ENCODE measurements at regions of chr19 and their contacts with region 1.

Region 1: DNA sequence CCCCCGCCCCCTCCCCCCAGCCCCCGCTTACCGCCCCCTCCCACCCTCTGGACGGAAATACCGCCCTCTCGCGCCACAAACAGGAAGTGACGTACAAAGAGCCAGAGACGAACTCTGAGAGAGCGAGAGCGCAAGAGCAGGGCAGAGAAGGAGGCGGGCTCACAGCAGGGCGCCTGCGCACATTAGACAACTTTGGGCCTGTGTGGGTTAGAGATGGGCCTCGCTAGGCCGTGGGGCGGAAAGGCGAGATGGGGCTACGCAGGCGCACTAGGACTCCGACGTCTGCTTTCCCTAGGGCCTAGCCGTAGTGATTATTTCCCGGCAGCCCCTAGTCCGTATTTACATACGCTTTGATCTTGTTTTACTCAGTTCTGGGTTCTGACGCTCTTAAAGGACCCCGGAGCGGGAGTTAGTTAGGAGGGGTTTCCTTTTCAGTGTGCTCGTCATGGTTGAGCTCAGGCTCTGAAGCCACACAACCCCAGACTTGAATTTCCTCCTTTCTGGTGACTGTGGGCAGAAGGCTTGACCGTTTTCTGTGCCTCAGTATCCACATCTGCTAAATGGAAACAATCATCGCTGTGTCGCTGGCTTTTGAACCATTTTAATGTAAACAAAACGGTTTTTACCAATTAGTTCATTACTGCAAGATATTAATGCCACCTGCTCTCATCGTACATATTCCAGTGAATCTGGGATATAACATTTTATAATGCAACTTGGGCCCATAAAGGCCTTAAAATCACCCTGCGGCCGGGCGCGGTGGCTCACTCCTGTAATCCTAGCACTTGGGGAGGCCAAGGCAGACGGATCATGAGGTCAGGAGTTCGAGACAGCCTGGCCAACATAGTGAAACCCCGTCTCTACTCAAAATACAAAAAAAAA is 449 bp upstream of the AKT2 start:
- DNase-seq: peak; percentile 98
- ATAC-seq: peak; percentile 89
- H3K4me3 Mint-ChIP-seq: peak overlapping the region; percentile 95
- H3K27ac Mint-ChIP-seq: peak overlapping the region; percentile 99
- H3K4me1 Mint-ChIP-seq: peaks cover 42% of the 10 kb centered on the region
- H3K27me3 Mint-ChIP-seq: no peaks in the 10 kb centered on the region

Region 2: GRCh38 chr19:39996811-39997594 is 288.6 kb before region 1 on chr19 and contains the start of gene ZNF546:
- CTCF ChIA-PET with region 1: no interaction called
- POLR2A ChIA-PET with region 1: no interaction called
- intact Hi-C with region 1: loop called in 1 of 2 experiments (anchors 1 kb)
- DNase-seq: peak; percentile 94
- ATAC-seq: peak; percentile 90
- H3K4me3 Mint-ChIP-seq: peak within 1 kb of the TSS; percentile 90
- H3K27ac Mint-ChIP-seq: peak within 1 kb of the TSS; percentile 99
- H3K4me1 Mint-ChIP-seq: peaks cover 48% of the 10 kb centered on the region
- H3K27me3 Mint-ChIP-seq: no peaks in the 10 kb centered on the region
- total RNA-seq, gene ZNF546: 6.3 to 6.9 TPM

Region 3: DNA sequence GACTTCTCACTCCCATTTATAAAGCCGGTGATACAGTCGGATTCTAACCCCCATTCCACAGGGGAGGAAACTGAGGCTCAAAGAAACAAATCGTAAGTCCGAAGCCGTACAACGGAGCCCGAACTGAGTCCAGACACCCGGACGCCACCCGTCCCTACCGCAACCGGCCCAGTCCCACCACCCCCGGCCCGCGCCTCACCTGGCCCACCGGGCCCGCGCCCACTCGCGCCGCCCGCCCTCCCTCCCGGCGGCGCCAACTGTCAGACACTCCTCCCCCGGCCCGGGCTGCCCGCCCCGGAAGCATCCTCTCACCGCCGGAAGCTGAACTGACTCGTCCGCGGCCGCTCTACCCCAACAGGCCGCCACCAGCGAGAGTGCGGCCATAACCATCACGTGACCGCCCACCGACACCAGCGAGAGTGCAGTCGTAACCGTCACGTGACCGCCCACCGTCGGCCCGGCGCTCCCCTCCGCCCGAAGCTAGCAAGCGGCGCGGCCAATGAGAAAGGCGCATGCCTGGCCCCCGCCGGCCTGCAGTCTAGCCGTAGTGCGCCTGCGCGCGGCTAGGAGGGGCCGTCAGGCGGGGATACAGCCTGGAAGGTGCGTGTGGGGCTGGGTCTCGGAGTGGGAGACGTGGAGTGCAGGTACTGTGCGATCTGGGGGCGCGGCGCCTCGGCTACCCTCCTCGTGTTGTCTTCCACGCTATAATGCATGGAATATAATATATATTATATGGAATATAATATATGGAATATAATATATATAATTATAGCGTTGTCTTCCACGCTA is 62.7 kb after region 1 on chr19 and contains the starts of genes C19orf47 and PLD3:
- CTCF ChIA-PET with region 1: no interaction called
- POLR2A ChIA-PET with region 1: no interaction called
- intact Hi-C with region 1: loop called (anchors 1 kb)
- DNase-seq: peak; percentile 100
- ATAC-seq: peak; percentile 97
- H3K4me3 Mint-ChIP-seq: peak within 1 kb of the TSS; percentile 96
- H3K27ac Mint-ChIP-seq: peak within 1 kb of the TSS; percentile 91
- H3K4me1 Mint-ChIP-seq: peaks cover 26% of the 10 kb centered on the region
- H3K27me3 Mint-ChIP-seq: no peaks in the 10 kb centered on the region
- total RNA-seq, gene C19orf47: 15.8 to 17.7 TPM
- total RNA-seq, gene PLD3: 57.8 to 69.1 TPM

Region 4: GRCh38 chr19:40465557-40466150 is 180.1 kb after region 1 on chr19 and contains the start of gene BLVRB:
- CTCF ChIA-PET with region 1: interaction called, 6 read pairs
- POLR2A ChIA-PET with region 1: interaction called, 3 read pairs
- intact Hi-C with region 1: loop called in 1 of 2 experiments (anchors 1 kb)
- DNase-seq: peak; percentile 100
- ATAC-seq: peak; percentile 84
- H3K4me3 Mint-ChIP-seq: peak within 1 kb of the TSS; percentile 77
- H3K27ac Mint-ChIP-seq: peak within 1 kb of the TSS; percentile 87
- H3K4me1 Mint-ChIP-seq: peaks cover 30% of the 10 kb centered on the region
- H3K27me3 Mint-ChIP-seq: peaks cover 11% of the 10 kb centered on the region
- total RNA-seq, gene BLVRB: 34.1 to 35.6 TPM

Region 5: GRCh38 chr19:40603389-40604135 is 318.0 kb after region 1 on chr19:
- CTCF ChIA-PET with region 1: no interaction called
- POLR2A ChIA-PET with region 1: no interaction called
- intact Hi-C with region 1: loop called in 1 of 2 experiments (anchors 2 kb)
- DNase-seq: peak; percentile 99
- ATAC-seq: peak; percentile 80
- H3K4me3 Mint-ChIP-seq: peak overlapping the region; percentile 52
- H3K27ac Mint-ChIP-seq: no peak overlapping the region
- H3K4me1 Mint-ChIP-seq: peaks cover 66% of the 10 kb centered on the region
- H3K27me3 Mint-ChIP-seq: peaks cover 22% of the 10 kb centered on the region

Region 6: DNA sequence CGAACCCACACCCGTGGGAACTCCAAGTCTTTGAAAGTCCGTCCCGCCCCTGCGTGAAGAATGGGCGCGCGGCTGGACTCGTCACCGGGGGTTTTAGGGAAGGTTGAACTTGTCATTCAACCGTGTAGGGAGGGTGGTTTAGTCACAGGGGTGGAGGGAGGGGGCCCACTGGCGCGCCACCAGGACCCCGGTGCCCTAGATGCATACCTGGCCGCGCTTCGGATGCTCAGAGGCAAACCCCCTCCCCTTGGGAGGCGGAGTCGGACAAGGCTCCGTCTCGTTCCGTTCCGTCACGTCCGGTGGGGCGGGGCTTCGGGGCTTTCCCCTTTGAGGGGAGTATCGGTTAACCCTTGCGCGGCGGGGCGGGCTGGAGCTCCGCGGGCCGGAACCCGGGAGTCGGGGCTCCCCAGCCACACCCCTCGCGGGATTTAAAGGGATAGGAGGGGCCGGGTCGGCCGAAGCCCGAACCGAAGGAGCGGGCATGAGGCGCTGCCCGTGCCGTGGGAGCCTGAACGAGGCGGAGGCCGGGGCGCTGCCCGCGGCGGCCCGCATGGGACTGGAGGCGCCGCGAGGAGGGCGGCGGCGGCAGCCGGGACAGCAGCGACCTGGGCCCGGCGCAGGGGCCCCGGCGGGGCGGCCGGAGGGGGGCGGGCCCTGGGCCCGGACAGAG is 431.2 kb after region 1 on chr19 and contains the starts of genes COQ8B and ITPKC:
- CTCF ChIA-PET with region 1: no interaction called
- POLR2A ChIA-PET with region 1: no interaction called
- intact Hi-C with region 1: loop called in 1 of 2 experiments (anchors 1 kb)
- DNase-seq: peak; percentile 100
- ATAC-seq: peak; percentile 65
- H3K4me3 Mint-ChIP-seq: peak within 1 kb of the TSS; percentile 93
- H3K27ac Mint-ChIP-seq: peak within 1 kb of the TSS; percentile 98
- H3K4me1 Mint-ChIP-seq: peaks cover 59% of the 10 kb centered on the region
- H3K27me3 Mint-ChIP-seq: no peaks in the 10 kb centered on the region
- total RNA-seq, gene COQ8B: 21.2 to 29.9 TPM
- total RNA-seq, gene ITPKC: 4.6 to 5.6 TPM

Region 7: GRCh38 chr19:41397086-41398049 is 1111.8 kb after region 1 on chr19 and contains the starts of genes BCKDHA and EXOSC5:
- CTCF ChIA-PET with region 1: no interaction called
- POLR2A ChIA-PET with region 1: no interaction called
- intact Hi-C with region 1: loop called in 1 of 2 experiments (anchors 5 kb)
- DNase-seq: peak; percentile 99
- ATAC-seq: peak; percentile 100
- H3K4me3 Mint-ChIP-seq: peak within 1 kb of the TSS; percentile 97
- H3K27ac Mint-ChIP-seq: peak within 1 kb of the TSS; percentile 97
- H3K4me1 Mint-ChIP-seq: peaks cover 31% of the 10 kb centered on the region
- H3K27me3 Mint-ChIP-seq: no peaks in the 10 kb centered on the region
- total RNA-seq, gene BCKDHA: 14.5 to 25.4 TPM
- total RNA-seq, gene EXOSC5: 32.7 to 47.8 TPM

Measured in activated CD4-positive, alpha-beta T cell treated with anti-CD3 and anti-CD28 coated beads for 36 hours (primary cell).